Right lobe of liver (tissue), 6 donors: ENCODE measurements at regions of chr11 and their contacts with region 1.

Region 1: GRCh38 chr11:44556735-44557409 is 8.6 kb upstream of the CD82 start:
- DNase-seq: peak; percentile 61 to 71 (median 68)
- ATAC-seq: peak; percentile 88 to 90 (median 88)
- H3K4me3 ChIP-seq: no peak overlapping the region
- H3K27ac ChIP-seq: peak overlapping the region in 2 of 3 donors; percentile 29 to 52
- H3K4me1 ChIP-seq: peaks cover 0 to 12% (median 7%) of the 10 kb centered on the region in 4 donors
- H3K27me3 ChIP-seq: no peaks in the 10 kb centered on the region
- CTCF ChIP-seq: peak; percentile 74 to 93 (median 76)
- POLR2A ChIP-seq: no peak

Region 2: DNA sequence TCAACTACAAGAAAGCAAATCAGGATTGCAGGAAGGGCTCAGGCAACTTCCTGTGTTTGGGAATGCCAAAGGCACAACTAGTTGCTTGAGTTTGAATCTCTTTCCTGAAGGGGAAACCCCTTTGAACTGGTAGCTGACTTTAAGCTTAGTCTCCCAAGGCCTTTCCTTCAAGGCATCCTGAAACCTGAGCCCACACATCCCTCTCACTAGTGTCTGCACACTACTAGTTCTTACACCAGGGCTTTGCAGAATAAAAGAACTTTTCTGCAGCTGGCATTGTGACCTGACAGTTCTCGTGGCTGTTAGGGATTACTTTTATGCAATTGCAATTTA is 366.0 kb before region 1 on chr11:
- intact Hi-C with region 1: no loop called
- DNase-seq: no peak
- ATAC-seq: no peak
- H3K4me3 ChIP-seq: no peak overlapping the region
- H3K27ac ChIP-seq: no peak overlapping the region
- H3K4me1 ChIP-seq: no peaks in the 10 kb centered on the region
- H3K27me3 ChIP-seq: no peaks in the 10 kb centered on the region
- CTCF ChIP-seq: no peak
- POLR2A ChIP-seq: no peak

Region 3: GRCh38 chr11:44456544-44457300 is 100.2 kb before region 1 on chr11:
- intact Hi-C with region 1: no loop called
- DNase-seq: no peak
- ATAC-seq: peak in 3 of 4 donors; percentile 38 to 43 (median 43)
- H3K4me3 ChIP-seq: no peak overlapping the region
- H3K27ac ChIP-seq: no peak overlapping the region
- H3K4me1 ChIP-seq: no peaks in the 10 kb centered on the region
- H3K27me3 ChIP-seq: no peaks in the 10 kb centered on the region
- CTCF ChIP-seq: peak in 1 of 4 donors; percentile 25
- POLR2A ChIP-seq: no peak

Region 4: GRCh38 chr11:44927174-44927661 is 370.3 kb after region 1 on chr11:
- intact Hi-C with region 1: loop called in 1 of 2 experiments (anchors 10 kb)
- DNase-seq: peak; percentile 68 to 73 (median 71)
- ATAC-seq: peak; percentile 64 to 77 (median 76)
- H3K4me3 ChIP-seq: no peak overlapping the region
- H3K27ac ChIP-seq: no peak overlapping the region
- H3K4me1 ChIP-seq: no peaks in the 10 kb centered on the region
- H3K27me3 ChIP-seq: no peaks in the 10 kb centered on the region
- CTCF ChIP-seq: peak; percentile 78 to 85 (median 82)
- POLR2A ChIP-seq: no peak